ENCODE measurements at regions of chr12 and their contacts with region 1.

Region 1: GRCh38 chr12:32264961-32265360 is 134.4 kb upstream of the FGD4 start:
- DNase-seq: no peak
- ATAC-seq: no peak
- H3K4me3 Mint-ChIP-seq: no peak overlapping the region
- H3K27ac Mint-ChIP-seq: no peak overlapping the region
- H3K4me1 Mint-ChIP-seq: peaks cover 9% of the 10 kb centered on the region
- H3K27me3 Mint-ChIP-seq: no peaks in the 10 kb centered on the region

Region 2: GRCh38 chr12:31491819-31492598 is 773.0 kb before region 1 on chr12:
- CTCF ChIA-PET with region 1: no interaction called
- POLR2A ChIA-PET with region 1: no interaction called
- intact Hi-C with region 1: no loop called
- DNase-seq: no peak
- ATAC-seq: no peak
- H3K4me3 Mint-ChIP-seq: no peak overlapping the region
- H3K27ac Mint-ChIP-seq: no peak overlapping the region
- H3K4me1 Mint-ChIP-seq: no peaks in the 10 kb centered on the region
- H3K27me3 Mint-ChIP-seq: peaks cover 6% of the 10 kb centered on the region

Region 3: GRCh38 chr12:32115404-32116104 is 149.4 kb before region 1 on chr12:
- CTCF ChIA-PET with region 1: no interaction called
- POLR2A ChIA-PET with region 1: interaction called, 10 read pairs
- intact Hi-C with region 1: no loop called
- DNase-seq: no peak
- ATAC-seq: no peak
- H3K4me3 Mint-ChIP-seq: no peak overlapping the region
- H3K27ac Mint-ChIP-seq: no peak overlapping the region
- H3K4me1 Mint-ChIP-seq: peaks cover 16% of the 10 kb centered on the region
- H3K27me3 Mint-ChIP-seq: no peaks in the 10 kb centered on the region

Region 4: GRCh38 chr12:32377344-32378055 is 112.5 kb after region 1 on chr12:
- CTCF ChIA-PET with region 1: no interaction called
- POLR2A ChIA-PET with region 1: no interaction called
- intact Hi-C with region 1: no loop called
- DNase-seq: no peak
- ATAC-seq: no peak
- H3K4me3 Mint-ChIP-seq: no peak overlapping the region
- H3K27ac Mint-ChIP-seq: no peak overlapping the region
- H3K4me1 Mint-ChIP-seq: no peaks in the 10 kb centered on the region
- H3K27me3 Mint-ChIP-seq: no peaks in the 10 kb centered on the region